PC-9 (cell line): ENCODE measurements at regions of chr11 and their contacts with region 1.

Region 1: DNA sequence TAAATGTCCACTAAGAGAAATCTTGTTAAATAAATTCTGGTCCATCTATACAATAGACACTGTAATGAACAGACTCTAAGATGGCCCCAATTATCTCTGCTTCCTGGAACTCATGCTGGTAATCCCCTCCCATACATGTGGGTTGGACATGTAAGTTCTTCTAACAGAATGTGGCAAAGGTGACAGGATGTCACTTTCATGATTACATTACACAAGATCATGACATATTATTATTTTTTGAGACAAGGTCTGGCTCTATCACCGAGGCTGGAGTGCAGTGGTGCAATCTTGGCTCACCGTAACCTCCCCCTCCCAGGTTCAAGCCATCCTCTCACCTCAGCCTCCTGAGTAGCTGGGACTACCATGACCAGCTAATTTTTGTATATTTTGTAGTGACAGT is 14.6 kb upstream of the NDUFC2 start:
- DNase-seq: no peak
- H3K4me3 ChIP-seq: no peak overlapping the region
- H3K27ac ChIP-seq: no peak overlapping the region
- H3K4me1 ChIP-seq: no peaks in the 10 kb centered on the region
- H3K27me3 ChIP-seq: no peaks in the 10 kb centered on the region
- CTCF ChIP-seq: no peak

Region 2: GRCh38 chr11:78050964-78051831 is 43.1 kb before region 1 on chr11:
- CTCF ChIA-PET with region 1: no interaction called
- POLR2A ChIA-PET with region 1: no interaction called
- intact Hi-C with region 1: no loop called
- DNase-seq: peak; percentile 53 to 80
- H3K4me3 ChIP-seq: no peak overlapping the region
- H3K27ac ChIP-seq: peak overlapping the region; percentile 80
- H3K4me1 ChIP-seq: peaks cover 16% of the 10 kb centered on the region
- H3K27me3 ChIP-seq: no peaks in the 10 kb centered on the region
- CTCF ChIP-seq: no peak

Region 3: DNA sequence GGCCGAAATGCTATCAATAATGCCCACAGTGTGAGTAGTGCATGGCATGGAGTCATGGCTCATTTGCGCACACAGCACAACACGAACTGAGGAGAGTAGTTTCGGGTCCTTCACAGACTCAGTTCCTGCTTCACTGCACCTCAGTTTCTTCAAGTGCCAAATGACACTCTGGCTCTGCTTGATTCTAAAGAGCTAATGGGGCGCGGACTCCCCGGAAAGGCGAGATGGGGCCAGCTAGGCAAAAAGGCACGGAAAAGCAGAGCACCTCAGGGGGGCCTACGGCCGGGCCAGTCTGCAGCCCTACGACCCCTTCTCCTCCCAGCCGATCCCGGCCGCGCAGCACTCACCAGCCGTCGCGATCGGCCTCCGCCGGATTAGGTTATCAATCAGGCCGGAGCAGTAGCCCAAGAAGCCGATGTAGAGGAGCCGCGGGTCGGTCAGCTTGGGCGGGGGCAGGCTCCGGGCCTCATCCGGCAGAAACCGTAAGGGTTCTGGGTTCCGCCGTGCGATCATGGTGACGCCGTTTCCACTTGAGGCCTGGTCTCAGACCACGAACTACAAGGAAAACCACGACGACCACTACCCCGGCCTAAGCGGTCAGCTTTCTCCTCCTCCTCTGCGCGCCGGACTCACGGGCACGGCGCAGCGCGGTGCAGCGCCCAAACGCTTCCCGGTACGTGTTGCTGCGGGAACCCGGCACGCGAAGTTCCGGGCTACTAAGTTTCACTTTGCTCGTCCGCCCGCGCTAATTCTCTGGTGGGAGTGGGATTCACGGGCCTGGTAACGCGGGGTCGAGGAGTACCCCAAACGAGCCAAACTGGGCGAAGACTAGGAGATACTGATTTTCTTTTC is 14.8 kb before region 1 on chr11 and contains the start of gene NDUFC2:
- CTCF ChIA-PET with region 1: interaction called, 11 read pairs
- POLR2A ChIA-PET with region 1: interaction called, 3 read pairs
- intact Hi-C with region 1: no loop called
- DNase-seq: peak; percentile 73 to 82
- H3K4me3 ChIP-seq: peak within 1 kb of the TSS; percentile 89
- H3K27ac ChIP-seq: peak within 1 kb of the TSS; percentile 46
- H3K4me1 ChIP-seq: peaks cover 35% of the 10 kb centered on the region
- H3K27me3 ChIP-seq: no peaks in the 10 kb centered on the region
- CTCF ChIP-seq: 0 out of 2 replicates have a peak, but pooled peaks have one; percentile 14
- total RNA-seq, gene NDUFC2: 380 and 394 TPM in 2 replicates

Region 4: DNA sequence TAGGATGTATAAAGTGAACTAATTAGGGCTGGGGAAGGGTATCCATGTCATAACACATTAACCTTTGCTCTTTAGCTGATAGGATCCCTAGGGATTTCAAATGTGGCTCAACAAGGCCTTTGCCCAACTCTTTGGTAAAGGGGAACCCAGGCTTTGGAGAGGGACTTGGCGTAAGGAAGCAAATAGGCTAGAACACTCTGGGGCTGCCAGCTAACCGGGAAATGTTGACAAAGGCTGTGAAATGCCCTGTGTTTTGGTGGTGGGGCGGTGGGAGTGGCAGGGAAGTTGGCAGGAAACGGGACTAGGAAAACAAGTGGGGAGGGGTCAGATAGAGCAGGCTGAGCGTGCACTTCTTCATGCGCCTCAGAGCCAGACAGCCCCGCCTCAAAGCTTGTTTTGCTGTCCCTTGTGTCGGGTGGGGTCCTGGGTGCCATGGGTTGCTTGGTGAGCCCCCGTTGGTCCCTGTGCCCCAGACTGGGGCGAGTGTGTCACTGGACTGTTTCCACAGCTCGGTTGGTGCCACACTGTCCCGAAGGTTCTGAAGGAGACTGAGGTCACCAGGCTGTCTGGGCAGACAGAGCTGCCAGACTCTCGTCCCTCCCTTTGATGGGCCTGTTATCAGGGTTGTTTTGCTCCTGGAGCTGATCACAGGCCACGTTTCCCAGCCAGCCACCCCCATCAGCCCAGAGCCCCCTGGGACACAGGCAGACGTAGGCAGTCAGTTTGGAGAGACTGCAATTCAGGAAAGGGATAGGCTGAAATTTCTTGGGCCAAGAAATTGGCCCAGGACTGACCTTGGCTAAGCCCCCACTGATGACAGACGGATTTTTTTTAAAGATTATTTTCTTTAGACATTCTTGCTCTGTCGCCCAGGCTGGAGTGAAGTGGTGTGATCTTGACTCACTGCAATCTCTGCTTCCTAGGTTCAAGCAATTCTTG is 74.6 kb after region 1 on chr11:
- CTCF ChIA-PET with region 1: no interaction called
- POLR2A ChIA-PET with region 1: no interaction called
- intact Hi-C with region 1: no loop called
- DNase-seq: no peak
- H3K4me3 ChIP-seq: no peak overlapping the region
- H3K27ac ChIP-seq: no peak overlapping the region
- H3K4me1 ChIP-seq: no peaks in the 10 kb centered on the region
- H3K27me3 ChIP-seq: no peaks in the 10 kb centered on the region
- CTCF ChIP-seq: no peak